ENCODE measurements at regions of chr11 and their contacts with region 1.

Region 1: DNA sequence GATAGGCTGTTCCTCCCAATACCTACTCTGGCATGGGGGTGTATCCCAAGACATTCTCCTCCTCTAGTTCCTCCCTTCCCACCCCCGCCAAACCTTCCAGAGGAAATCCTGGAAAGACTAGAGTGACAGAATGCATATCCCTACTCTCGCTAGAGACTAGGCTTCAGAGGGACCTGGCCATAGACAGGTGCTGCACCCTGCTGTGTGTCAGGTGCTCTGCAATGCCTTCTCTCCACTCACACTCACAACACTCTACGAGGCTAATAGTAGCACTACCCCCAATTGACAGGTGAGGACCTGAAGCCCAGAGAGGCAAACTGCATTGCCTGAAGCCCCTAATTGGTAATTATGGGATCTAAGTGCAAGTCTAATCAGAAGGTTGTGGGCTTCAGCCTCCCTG is 46.2 kb upstream of the LMO1 start:
- DNase-seq: peak; percentile 26
- H3K4me3 Mint-ChIP-seq: no peak overlapping the region
- H3K27ac Mint-ChIP-seq: no peak overlapping the region
- H3K4me1 Mint-ChIP-seq: no peaks in the 10 kb centered on the region
- H3K27me3 Mint-ChIP-seq: peaks cover 60% of the 10 kb centered on the region
- CTCF ChIP-seq: no peak

Region 2: DNA sequence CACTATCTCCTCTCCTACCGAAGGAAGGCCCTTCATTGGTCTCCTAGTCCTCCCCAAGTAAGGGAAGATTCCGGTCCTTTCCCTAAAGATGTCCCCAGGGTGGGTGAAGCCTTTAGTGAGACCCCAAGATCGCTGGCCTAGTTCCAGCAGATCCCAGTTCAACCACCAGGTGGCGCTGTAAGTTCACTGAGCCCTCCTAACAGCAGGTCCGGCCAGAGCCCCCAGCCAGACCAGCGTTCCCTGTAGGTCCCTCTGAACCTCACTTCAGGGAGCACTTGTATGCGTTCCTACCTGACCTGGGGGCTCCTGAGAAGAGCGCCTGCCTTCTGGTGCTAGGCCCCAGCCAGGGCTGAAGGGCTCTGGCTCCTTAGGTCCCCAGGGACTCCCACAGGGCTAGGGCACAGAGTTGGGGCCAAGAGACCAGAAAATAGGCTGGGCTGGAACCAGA is 84.2 kb before region 1 on chr11:
- CTCF ChIA-PET with region 1: no interaction called
- intact Hi-C with region 1: loop called (anchors 1 kb)
- DNase-seq: peak; percentile 73
- H3K4me3 Mint-ChIP-seq: no peak overlapping the region
- H3K27ac Mint-ChIP-seq: no peak overlapping the region
- H3K4me1 Mint-ChIP-seq: no peaks in the 10 kb centered on the region
- H3K27me3 Mint-ChIP-seq: peaks cover 69% of the 10 kb centered on the region
- CTCF ChIP-seq: peak; percentile 94

Region 3: DNA sequence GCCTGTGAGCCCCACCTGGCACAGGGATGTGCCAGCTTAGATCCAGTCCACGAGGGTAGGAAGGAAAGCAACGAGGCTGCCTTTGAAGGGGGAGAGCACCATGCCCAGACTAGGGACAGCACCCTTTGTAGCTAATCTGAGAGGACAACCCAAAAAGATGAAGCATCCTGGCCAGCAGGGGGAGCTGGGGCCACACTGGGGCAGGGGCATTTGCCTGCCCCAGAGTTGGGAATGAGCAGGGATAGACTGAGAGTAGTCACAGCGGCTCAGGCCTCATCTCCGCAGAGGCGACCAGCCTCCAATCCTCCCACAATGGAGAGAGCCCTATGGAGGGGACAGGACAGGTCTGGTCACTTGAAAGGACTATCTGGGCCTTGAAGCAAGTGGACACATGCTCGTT is 62.5 kb before region 1 on chr11:
- CTCF ChIA-PET with region 1: interaction called, 4 read pairs
- intact Hi-C with region 1: loop called (anchors 1 kb)
- DNase-seq: peak; percentile 71
- H3K4me3 Mint-ChIP-seq: no peak overlapping the region
- H3K27ac Mint-ChIP-seq: no peak overlapping the region
- H3K4me1 Mint-ChIP-seq: no peaks in the 10 kb centered on the region
- H3K27me3 Mint-ChIP-seq: peaks cover 99% of the 10 kb centered on the region
- CTCF ChIP-seq: peak; percentile 76

Region 4: GRCh38 chr11:8373521-8374432 is 63.9 kb after region 1 on chr11:
- CTCF ChIA-PET with region 1: no interaction called
- intact Hi-C with region 1: no loop called
- DNase-seq: no peak
- H3K4me3 Mint-ChIP-seq: no peak overlapping the region
- H3K27ac Mint-ChIP-seq: no peak overlapping the region
- H3K4me1 Mint-ChIP-seq: no peaks in the 10 kb centered on the region
- H3K27me3 Mint-ChIP-seq: peaks cover 68% of the 10 kb centered on the region
- CTCF ChIP-seq: no peak